Activated CD4-positive, alpha-beta T cell treated with anti-CD3 and anti-CD28 coated beads, Interleukin-2, amount 10 ng/mL, durations not matched to agents 24 days and 14 days (primary cell): ENCODE measurements at regions of chrX and their contacts with region 1.

Region 1: GRCh38 chrX:107776649-107777535 is 641 bp upstream of the NCBP2L start:
- DNase-seq: peak; percentile 91
- H3K4me3 Mint-ChIP-seq: peak overlapping the region; percentile 89
- H3K27ac Mint-ChIP-seq: peak overlapping the region; percentile 74
- H3K4me1 Mint-ChIP-seq: peaks cover 12% of the 10 kb centered on the region
- H3K27me3 Mint-ChIP-seq: peaks cover 12% of the 10 kb centered on the region

Region 2: DNA sequence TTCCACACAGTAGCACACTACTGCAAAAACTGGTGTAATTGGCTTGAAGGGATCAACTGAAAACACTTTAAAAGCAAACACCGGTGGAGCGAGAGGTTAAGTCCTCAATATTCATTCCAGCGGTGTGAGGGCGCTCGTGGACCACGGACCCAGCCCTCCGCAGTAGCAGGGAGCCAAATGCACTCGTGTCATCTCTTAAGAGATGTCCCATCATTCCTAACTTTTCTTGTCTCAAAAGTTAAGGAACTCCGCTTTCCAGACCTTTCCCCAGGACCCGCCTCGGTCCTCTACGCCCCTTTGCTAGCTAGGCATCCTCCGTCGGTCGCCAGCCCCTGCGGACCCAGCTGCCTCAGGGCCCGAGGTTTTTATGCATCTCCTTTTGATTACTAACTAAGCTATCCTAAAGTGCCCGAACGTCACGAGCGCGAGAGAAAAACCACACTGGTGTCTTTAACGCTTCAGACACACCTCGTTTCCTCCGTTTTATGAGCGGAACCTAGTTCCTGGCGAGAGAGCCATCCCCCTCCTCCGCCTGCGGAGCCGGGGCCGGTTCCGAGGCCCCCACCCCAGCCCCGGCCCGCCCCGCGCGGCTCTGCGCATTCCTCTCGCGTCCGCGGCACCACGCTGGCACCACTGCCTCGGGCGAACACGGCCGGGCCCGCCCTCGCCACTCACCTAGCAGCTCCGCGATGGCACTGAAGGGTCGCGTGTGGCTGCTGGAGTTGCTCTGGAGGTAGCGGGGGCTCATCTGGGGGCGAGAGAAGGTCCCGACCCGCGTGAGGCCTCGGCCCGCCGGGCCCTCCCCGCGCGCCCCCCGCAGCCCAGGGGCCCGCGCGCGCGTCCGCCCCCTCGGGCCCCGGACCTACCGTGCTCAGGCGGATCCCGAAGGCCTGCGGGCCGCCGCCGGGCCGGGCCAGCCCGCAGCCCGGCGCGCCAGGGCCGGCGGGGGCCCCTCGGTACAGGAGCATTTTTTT is 777.6 kb before region 1 on chrX:
- intact Hi-C with region 1: loop called (anchors 2 kb)
- DNase-seq: peak; percentile 80
- H3K4me3 Mint-ChIP-seq: peak overlapping the region; percentile 88
- H3K27ac Mint-ChIP-seq: peak overlapping the region; percentile 40
- H3K4me1 Mint-ChIP-seq: peaks cover 7% of the 10 kb centered on the region
- H3K27me3 Mint-ChIP-seq: no peaks in the 10 kb centered on the region

Region 3: DNA sequence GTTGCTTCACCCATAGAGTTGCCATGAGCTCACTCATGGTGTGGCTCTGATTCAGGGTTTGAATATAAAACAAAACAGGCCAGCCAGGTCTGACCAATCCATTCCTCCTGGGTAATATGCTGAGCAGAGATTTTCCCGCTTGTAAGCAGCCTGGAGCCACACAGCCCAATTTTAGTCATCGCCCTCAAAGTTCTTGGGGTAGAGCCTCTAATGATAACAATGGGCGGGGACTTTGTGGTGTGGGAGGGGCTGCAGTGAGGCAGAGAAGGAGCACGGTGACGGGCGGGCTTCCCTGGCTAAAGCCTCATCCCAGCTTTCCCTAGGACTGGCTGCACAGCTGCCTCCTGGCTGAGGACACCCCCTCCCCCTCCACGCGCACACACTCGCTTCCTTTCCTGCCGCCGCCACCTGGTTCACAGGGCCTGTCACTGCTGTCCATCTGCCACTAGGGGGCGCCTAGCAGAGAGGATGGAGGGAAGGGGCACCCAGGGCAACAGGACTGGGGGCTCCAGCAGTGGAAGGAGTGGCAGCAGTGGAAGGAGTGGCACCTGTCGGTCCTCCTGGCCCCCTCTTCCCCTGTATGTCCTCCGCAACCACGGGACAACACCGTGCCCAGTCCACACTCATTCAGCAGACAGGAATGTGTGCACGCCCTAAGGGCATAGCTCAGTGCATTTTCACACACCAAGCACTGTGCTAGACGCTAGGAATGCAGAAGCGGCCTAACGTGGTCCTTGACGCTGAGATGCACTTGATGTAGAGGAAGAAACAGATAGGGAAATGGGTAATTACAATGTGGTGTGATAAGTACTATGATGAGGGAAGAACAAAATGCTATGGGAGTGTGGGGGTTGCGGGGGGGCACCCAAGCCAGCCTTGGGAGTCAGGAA is 121.8 kb before region 1 on chrX:
- intact Hi-C with region 1: loop called (anchors 1 kb)
- DNase-seq: peak; percentile 89
- H3K4me3 Mint-ChIP-seq: no peak overlapping the region
- H3K27ac Mint-ChIP-seq: no peak overlapping the region
- H3K4me1 Mint-ChIP-seq: peaks cover 5% of the 10 kb centered on the region
- H3K27me3 Mint-ChIP-seq: no peaks in the 10 kb centered on the region

Region 4: GRCh38 chrX:107716816-107717700 is 59.8 kb before region 1 on chrX:
- intact Hi-C with region 1: loop called (anchors 2 kb)
- DNase-seq: peak; percentile 96
- H3K4me3 Mint-ChIP-seq: peak overlapping the region; percentile 95
- H3K27ac Mint-ChIP-seq: peak overlapping the region; percentile 91
- H3K4me1 Mint-ChIP-seq: peaks cover 36% of the 10 kb centered on the region
- H3K27me3 Mint-ChIP-seq: no peaks in the 10 kb centered on the region

Region 5: GRCh38 chrX:107734646-107735045 is 42.2 kb before region 1 on chrX:
- intact Hi-C with region 1: no loop called
- DNase-seq: no peak
- H3K4me3 Mint-ChIP-seq: no peak overlapping the region
- H3K27ac Mint-ChIP-seq: no peak overlapping the region
- H3K4me1 Mint-ChIP-seq: peaks cover 2% of the 10 kb centered on the region
- H3K27me3 Mint-ChIP-seq: no peaks in the 10 kb centered on the region

Region 6: DNA sequence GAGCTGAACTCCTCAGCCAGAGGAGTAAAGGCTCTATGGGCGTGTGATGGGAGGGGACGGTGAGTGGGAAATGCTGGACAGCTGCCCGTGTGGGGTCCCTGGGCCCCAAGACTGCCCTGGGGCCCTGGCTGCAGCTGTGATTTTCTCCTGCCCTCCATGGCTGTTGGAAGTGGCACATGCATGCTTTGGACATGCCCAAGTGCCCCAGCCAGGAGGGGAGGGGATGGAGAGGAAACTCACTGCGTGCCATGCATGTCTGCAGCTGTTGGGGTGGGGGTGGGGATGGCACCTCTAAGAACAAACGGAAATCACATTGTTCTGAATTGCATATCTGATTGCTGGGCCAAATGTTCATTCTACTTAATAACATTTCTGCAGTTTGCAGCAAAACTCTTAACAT is 101.2 kb after region 1 on chrX:
- intact Hi-C with region 1: no loop called
- DNase-seq: no peak
- H3K4me3 Mint-ChIP-seq: no peak overlapping the region
- H3K27ac Mint-ChIP-seq: no peak overlapping the region
- H3K4me1 Mint-ChIP-seq: no peaks in the 10 kb centered on the region
- H3K27me3 Mint-ChIP-seq: no peaks in the 10 kb centered on the region

Region 7: DNA sequence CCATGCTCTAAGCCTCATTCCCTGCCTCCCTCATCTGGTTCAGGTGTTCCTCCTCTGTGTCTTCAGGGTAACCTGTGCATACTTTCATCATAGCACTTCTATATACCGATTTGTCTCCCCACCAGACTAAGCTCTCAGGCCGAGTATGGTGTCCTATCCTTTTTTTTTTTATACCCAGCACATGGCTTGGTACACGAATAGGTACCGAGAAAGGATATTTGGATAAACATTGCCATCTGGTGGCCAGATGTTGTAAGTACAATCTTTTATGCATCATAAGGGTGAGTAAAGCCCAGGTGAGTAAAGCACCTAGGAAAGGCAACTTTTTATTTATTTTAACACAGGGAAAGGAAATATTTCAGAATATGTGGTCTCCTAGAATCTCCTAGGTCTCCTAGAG is 117.1 kb after region 1 on chrX:
- intact Hi-C with region 1: loop called (anchors 5 kb)
- DNase-seq: peak; percentile 80
- H3K4me3 Mint-ChIP-seq: no peak overlapping the region
- H3K27ac Mint-ChIP-seq: no peak overlapping the region
- H3K4me1 Mint-ChIP-seq: no peaks in the 10 kb centered on the region
- H3K27me3 Mint-ChIP-seq: peaks cover 2% of the 10 kb centered on the region

Region 8: DNA sequence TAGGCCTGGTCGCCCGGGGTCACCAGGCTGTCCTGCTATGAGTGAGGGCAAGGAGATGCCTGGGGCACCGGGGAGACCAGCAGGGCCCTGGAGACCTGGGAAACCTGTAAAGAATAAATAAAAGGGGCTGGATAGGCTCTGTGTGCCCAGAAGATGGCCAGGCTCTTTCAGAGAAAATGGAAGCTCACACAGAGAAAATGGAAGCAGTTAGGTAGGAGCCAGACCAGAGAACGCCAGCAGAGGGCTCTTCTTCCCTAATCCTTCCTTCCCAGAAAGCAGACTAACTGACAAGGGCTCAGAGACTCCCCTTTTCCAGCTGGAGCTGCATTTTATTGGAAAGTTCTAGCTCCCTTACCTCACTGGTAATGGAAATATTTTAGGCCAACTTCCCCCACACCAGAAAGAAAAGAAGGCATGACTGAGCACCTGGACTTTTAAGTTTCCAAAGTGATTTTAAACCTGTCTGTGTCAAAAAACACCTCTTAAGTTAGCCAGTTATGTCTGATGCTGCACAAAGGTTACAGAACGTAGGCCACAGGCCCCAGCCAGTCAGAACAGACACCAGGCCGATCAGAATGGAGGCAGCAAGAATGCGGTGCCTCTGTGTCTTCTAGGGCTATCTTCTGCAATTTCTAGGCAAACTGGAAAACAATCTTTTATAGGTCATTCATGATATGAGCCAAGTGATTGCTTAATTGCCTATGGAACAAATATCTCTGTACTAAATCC is 388.7 kb after region 1 on chrX:
- intact Hi-C with region 1: no loop called
- DNase-seq: no peak
- H3K4me3 Mint-ChIP-seq: no peak overlapping the region
- H3K27ac Mint-ChIP-seq: no peak overlapping the region
- H3K4me1 Mint-ChIP-seq: no peaks in the 10 kb centered on the region
- H3K27me3 Mint-ChIP-seq: no peaks in the 10 kb centered on the region

Region 9: GRCh38 chrX:108235986-108236385 is 459.1 kb after region 1 on chrX:
- intact Hi-C with region 1: no loop called
- DNase-seq: no peak
- H3K4me3 Mint-ChIP-seq: no peak overlapping the region
- H3K27ac Mint-ChIP-seq: no peak overlapping the region
- H3K4me1 Mint-ChIP-seq: peaks cover 2% of the 10 kb centered on the region
- H3K27me3 Mint-ChIP-seq: peaks cover 7% of the 10 kb centered on the region